ENCODE measurements at regions of chr10 and their contacts with region 1.

Region 1: GRCh38 chr10:116787893-116788665 is 45.7 kb upstream of the HSPA12A start:
- DNase-seq: peak; percentile 57
- H3K4me3 Mint-ChIP-seq: peak overlapping the region; percentile 69
- H3K27ac Mint-ChIP-seq: no peak overlapping the region
- H3K4me1 Mint-ChIP-seq: peaks cover 6% of the 10 kb centered on the region
- H3K27me3 Mint-ChIP-seq: no peaks in the 10 kb centered on the region
- CTCF ChIP-seq: peak; percentile 98

Region 2: GRCh38 chr10:116470768-116471415 is 317.2 kb before region 1 on chr10:
- CTCF ChIA-PET with region 1: no interaction called
- POLR2A ChIA-PET with region 1: no interaction called
- intact Hi-C with region 1: loop called (anchors 5 kb)
- DNase-seq: peak; percentile 58
- H3K4me3 Mint-ChIP-seq: no peak overlapping the region
- H3K27ac Mint-ChIP-seq: peak overlapping the region; percentile 54
- H3K4me1 Mint-ChIP-seq: peaks cover 10% of the 10 kb centered on the region
- H3K27me3 Mint-ChIP-seq: no peaks in the 10 kb centered on the region
- CTCF ChIP-seq: peak; percentile 46

Region 3: DNA sequence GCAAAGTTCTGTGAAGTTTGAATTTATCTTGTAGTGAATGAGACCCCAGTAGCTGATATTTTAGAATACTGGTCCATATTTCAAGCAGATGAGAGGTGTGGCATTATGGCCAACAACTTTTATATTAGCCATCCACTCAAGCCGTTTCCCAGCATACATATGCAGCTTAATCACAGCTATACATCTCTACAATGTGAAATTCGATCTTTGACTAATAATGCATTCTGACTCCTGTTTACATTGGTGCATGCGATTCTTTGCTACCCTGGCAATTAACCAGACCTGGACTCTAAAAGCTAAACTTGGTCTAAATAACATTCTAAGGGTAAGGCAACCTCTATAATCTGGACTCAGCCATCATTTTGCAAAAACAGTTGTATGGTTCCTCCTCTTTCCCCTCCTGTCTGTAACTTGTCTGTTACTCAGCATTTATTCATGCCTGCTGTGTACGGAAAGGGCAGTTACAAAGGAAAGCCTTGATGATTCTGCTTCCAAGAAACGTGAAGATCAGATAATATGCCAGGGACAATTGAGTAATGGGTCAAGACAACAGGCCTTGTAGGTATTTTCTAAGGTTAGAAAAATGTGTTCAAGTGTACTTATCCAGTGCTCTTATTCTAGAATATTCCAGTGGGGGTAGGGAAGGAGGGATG is 116.7 kb before region 1 on chr10:
- CTCF ChIA-PET with region 1: interaction called, 33 read pairs
- POLR2A ChIA-PET with region 1: no interaction called
- intact Hi-C with region 1: no loop called
- DNase-seq: no peak
- H3K4me3 Mint-ChIP-seq: no peak overlapping the region
- H3K27ac Mint-ChIP-seq: no peak overlapping the region
- H3K4me1 Mint-ChIP-seq: no peaks in the 10 kb centered on the region
- H3K27me3 Mint-ChIP-seq: no peaks in the 10 kb centered on the region
- CTCF ChIP-seq: no peak

Region 4: DNA sequence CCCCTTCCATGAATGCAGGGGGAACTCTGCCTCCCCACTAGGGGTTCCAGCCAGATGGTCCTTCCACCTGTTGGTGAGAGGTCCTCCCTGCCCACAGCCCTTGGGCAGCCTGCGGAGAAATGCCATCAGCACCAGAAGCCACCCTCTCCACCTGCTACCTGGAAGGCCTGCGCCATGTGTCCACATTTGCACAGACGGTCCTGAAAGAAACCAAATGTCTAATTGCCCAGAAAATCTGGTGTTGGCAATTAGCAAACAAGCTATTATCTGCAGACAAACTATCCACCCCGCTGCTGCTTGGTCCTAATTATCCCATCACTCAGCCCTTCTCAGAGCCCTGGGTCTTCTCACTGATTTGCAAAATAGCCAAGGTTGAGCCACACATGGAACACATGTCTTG is 78.0 kb before region 1 on chr10:
- CTCF ChIA-PET with region 1: interaction called, 13 read pairs
- POLR2A ChIA-PET with region 1: no interaction called
- intact Hi-C with region 1: no loop called
- DNase-seq: no peak
- H3K4me3 Mint-ChIP-seq: no peak overlapping the region
- H3K27ac Mint-ChIP-seq: no peak overlapping the region
- H3K4me1 Mint-ChIP-seq: no peaks in the 10 kb centered on the region
- H3K27me3 Mint-ChIP-seq: no peaks in the 10 kb centered on the region
- CTCF ChIP-seq: no peak

Region 5: DNA sequence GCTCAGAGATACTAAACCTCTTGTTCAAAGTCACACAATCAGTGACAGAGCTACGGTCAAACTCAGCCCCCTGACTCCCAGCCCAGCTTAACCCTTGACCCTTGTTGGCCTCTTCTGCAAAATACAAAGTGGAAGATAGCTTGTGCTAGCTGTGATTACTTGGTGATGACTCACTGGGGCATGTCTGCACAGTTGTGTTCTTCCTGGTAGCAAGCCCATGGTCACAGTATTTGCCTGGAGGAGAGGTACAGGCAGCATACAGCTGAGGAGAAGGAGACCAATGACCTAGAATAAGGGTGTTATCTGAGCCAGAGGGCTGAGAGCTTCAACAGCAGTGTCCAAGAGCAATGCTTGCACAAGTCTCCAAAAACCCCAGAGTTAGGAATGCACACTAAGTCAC is 40.0 kb before region 1 on chr10:
- CTCF ChIA-PET with region 1: interaction called, 42 read pairs
- POLR2A ChIA-PET with region 1: interaction called, 5 read pairs
- intact Hi-C with region 1: no loop called
- DNase-seq: peak; percentile 78
- H3K4me3 Mint-ChIP-seq: no peak overlapping the region
- H3K27ac Mint-ChIP-seq: peak overlapping the region; percentile 70
- H3K4me1 Mint-ChIP-seq: peaks cover 23% of the 10 kb centered on the region
- H3K27me3 Mint-ChIP-seq: no peaks in the 10 kb centered on the region
- CTCF ChIP-seq: no peak

Region 6: DNA sequence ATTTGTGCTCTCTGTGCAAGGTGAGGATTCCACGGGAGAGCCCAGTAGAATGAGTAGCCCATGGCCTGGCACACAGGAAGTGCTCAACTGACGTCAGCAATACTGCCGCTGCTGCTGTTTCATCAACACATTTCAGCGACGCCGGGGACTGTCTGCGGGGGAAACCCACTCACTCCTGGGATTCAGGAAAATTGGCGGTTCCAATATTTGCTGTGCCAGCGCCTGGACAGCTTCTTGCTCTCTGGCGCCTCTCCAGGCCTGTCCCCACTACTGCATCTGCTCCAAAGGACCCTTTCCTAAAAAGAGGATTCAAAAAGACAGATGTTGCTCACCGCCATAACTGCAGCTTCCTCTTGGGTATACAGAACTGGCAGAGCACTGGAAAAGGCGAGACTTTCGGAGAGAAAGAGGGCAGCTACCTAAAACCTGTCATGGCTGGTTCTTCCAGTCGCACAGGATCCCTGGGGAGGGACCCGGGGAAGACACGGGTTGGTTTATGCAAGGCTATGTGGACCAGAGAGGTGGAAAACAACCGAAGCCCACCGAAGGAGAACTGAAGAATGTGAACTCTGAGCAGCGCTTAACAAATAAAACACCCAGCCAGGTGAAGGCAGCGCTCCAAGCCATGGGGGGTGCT is 21.5 kb after region 1 on chr10:
- CTCF ChIA-PET with region 1: interaction called, 13 read pairs
- POLR2A ChIA-PET with region 1: interaction called, 3 read pairs
- intact Hi-C with region 1: no loop called
- DNase-seq: peak; percentile 40
- H3K4me3 Mint-ChIP-seq: no peak overlapping the region
- H3K27ac Mint-ChIP-seq: no peak overlapping the region
- H3K4me1 Mint-ChIP-seq: no peaks in the 10 kb centered on the region
- H3K27me3 Mint-ChIP-seq: peaks cover 35% of the 10 kb centered on the region
- CTCF ChIP-seq: peak; percentile 31

Region 7: DNA sequence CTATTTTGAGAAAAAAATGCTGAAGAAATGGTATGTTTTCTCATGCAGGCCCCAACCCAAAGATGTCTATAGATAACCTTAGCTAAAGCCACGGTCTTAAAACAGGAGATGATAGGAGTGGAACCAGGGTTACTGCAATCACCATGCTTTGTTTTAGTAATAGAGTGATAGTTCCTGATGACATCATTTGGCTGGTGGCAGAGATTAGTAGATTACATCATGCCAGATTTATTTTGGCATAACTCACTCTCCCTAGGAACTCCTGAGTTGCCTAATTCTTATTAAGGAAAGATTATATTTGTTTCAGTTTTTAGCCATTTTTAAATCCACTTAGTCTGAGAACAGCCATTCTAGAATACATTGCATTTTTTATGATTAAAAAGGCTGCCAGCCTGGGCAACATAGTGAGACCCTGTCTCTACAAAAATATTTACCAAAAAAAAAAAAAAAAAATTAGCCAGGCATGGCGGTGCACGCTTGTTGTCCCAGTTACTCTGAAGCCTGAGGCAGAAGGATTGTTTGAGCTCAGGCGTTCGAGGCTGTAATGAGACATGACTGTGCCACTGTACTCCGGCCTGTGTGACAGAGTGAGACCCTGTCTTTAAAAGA is 79.0 kb after region 1 on chr10:
- CTCF ChIA-PET with region 1: no interaction called
- POLR2A ChIA-PET with region 1: no interaction called
- intact Hi-C with region 1: no loop called
- DNase-seq: peak; percentile 51
- H3K4me3 Mint-ChIP-seq: no peak overlapping the region
- H3K27ac Mint-ChIP-seq: no peak overlapping the region
- H3K4me1 Mint-ChIP-seq: peaks cover 5% of the 10 kb centered on the region
- H3K27me3 Mint-ChIP-seq: no peaks in the 10 kb centered on the region
- CTCF ChIP-seq: no peak

Region 8: DNA sequence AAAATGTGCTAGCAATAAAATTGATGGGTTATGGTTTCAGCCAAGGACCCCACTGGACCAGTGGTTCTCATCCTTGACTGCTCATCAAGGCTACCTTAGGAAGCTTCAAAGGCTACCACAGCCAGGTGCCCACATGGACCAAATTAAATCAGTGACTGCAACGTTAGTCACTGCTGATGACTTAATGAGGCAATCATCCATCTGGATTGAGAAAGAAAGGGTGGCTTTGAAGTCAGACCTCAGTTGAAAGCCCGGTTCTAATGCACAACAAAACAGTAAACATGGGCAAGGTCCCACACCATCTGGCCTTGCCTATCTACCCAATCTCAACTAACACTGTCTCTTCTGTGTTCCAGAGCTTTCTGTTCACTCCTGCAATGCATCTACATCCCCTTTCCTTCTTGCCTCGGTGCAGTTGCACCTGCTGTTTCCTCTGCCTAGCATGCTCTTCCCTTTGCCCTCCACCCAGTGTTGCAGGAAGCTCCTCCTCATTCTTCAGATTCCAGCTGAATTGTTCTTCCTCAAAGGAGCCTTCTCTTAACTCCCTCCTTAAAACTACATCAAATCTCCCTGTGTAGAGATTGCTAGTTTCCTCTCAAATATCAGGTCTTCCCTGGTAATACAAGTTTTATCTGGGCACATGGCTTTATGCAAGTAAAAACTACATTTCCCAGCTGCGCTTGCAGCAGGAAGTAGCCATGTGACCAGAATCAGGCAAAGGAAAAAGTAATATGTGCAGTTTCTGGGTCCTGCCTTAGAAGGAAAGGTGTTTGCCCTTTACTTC is 398.9 kb after region 1 on chr10:
- CTCF ChIA-PET with region 1: interaction called, 15 read pairs
- POLR2A ChIA-PET with region 1: no interaction called
- intact Hi-C with region 1: no loop called
- DNase-seq: peak; percentile 79
- H3K4me3 Mint-ChIP-seq: no peak overlapping the region
- H3K27ac Mint-ChIP-seq: peak overlapping the region; percentile 3
- H3K4me1 Mint-ChIP-seq: peaks cover 8% of the 10 kb centered on the region
- H3K27me3 Mint-ChIP-seq: no peaks in the 10 kb centered on the region
- CTCF ChIP-seq: no peak

Measured in MCF 10A (cell line).